T-cell (primary cell): ENCODE measurements at regions of chr15 and their contacts with region 1.

Region 1: GRCh38 chr15:69468241-69469121 is 15.9 kb downstream of the RPLP1 start:
- DNase-seq: peak; percentile 59 to 94 (median 85)
- ATAC-seq: peak; percentile 92 to 99 (median 98)
- H3K4me3 ChIP-seq: peak overlapping the region in 1 of 2 donors; percentile 16
- H3K4me3 Mint-ChIP-seq: peak overlapping the region; percentile 61 to 76 (median 68)
- H3K27ac ChIP-seq: peak overlapping the region; percentile 99
- H3K27ac Mint-ChIP-seq: peak overlapping the region; percentile 90 to 91
- H3K4me1 ChIP-seq: peaks cover 19 to 36% of the 10 kb centered on the region in 2 experiments
- H3K4me1 Mint-ChIP-seq: peaks cover 24 to 44% (median 31%) of the 10 kb centered on the region in 3 donors
- H3K27me3 ChIP-seq: peaks cover 0 to 2% of the 10 kb centered on the region in 2 experiments
- H3K27me3 Mint-ChIP-seq: no peaks in the 10 kb centered on the region

Region 2: GRCh38 chr15:69311319-69311721 is 157.2 kb before region 1 on chr15:
- CTCF ChIA-PET with region 1: no interaction called
- POLR2A ChIA-PET with region 1: no interaction called
- DNase-seq: no peak
- ATAC-seq: no peak
- H3K4me3 ChIP-seq: no peak overlapping the region
- H3K4me3 Mint-ChIP-seq: no peak overlapping the region
- H3K27ac ChIP-seq: no peak overlapping the region
- H3K27ac Mint-ChIP-seq: no peak overlapping the region
- H3K4me1 ChIP-seq: no peaks in the 10 kb centered on the region
- H3K4me1 Mint-ChIP-seq: no peaks in the 10 kb centered on the region
- H3K27me3 ChIP-seq: peaks cover 0 to 27% of the 10 kb centered on the region in 2 experiments
- H3K27me3 Mint-ChIP-seq: peaks cover 19 to 24% of the 10 kb centered on the region in 2 donors

Region 3: GRCh38 chr15:69452692-69453521 is 15.6 kb before region 1 on chr15 and contains the start of gene RPLP1:
- CTCF ChIA-PET with region 1: interaction called, 4 to 56 read pairs
- POLR2A ChIA-PET with region 1: interaction called, 26 to 76 read pairs
- DNase-seq: peak; percentile 91 to 98 (median 95)
- ATAC-seq: peak; percentile 87 to 94 (median 92)
- H3K4me3 ChIP-seq: peak within 1 kb of the TSS; percentile 82 to 94
- H3K4me3 Mint-ChIP-seq: peak within 1 kb of the TSS; percentile 95 to 98 (median 96)
- H3K27ac ChIP-seq: peak within 1 kb of the TSS; percentile 86
- H3K27ac Mint-ChIP-seq: peak within 1 kb of the TSS; percentile 99
- H3K4me1 ChIP-seq: peaks cover 15 to 25% of the 10 kb centered on the region in 2 experiments
- H3K4me1 Mint-ChIP-seq: peaks cover 38 to 45% (median 39%) of the 10 kb centered on the region in 3 donors
- H3K27me3 ChIP-seq: no peaks in the 10 kb centered on the region
- H3K27me3 Mint-ChIP-seq: no peaks in the 10 kb centered on the region
- total RNA-seq, gene RPLP1: 1,904 to 4,142 (median 3,956) TPM

Region 4: DNA sequence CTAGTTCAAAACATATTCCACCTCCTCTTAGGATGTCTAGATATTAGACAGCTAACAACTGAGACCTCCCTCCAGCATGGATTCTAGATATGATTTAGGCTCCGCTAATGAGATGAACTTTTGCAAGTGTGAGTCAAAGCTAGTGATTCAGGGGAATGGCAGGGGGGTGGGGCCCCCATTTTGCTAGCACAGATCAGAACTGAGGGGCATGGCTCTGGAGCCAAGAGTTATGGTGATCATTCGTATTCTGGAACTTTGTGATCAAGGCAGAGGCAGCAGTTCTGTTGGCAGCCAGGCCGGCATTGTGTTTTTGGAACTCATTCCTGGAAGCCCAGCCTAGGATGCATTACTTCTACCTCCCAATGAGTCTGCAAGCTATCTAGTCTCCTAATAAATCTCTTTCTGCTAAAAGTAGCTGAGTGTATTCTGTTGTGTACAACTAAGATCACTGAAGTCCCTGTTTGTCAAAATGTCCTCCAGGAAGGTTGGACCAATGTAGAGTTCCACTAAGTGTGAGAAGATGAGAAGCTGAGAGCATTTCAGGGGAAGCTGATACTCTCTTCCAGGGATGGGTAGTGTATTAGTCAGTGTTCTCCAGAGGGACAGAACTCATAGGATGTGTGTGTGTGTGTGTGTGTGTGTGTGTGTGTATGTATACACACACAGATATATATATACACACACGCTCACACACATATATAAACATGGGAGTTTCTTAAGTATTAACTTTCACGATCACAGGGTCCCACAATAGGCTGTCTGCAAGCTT is 316.5 kb after region 1 on chr15:
- CTCF ChIA-PET with region 1: no interaction called
- POLR2A ChIA-PET with region 1: no interaction called
- DNase-seq: no peak
- ATAC-seq: no peak
- H3K4me3 ChIP-seq: no peak overlapping the region
- H3K4me3 Mint-ChIP-seq: no peak overlapping the region
- H3K27ac ChIP-seq: no peak overlapping the region
- H3K27ac Mint-ChIP-seq: peak overlapping the region in 1 of 2 donors; percentile 79
- H3K4me1 ChIP-seq: peaks cover 16 to 20% of the 10 kb centered on the region in 2 experiments
- H3K4me1 Mint-ChIP-seq: peaks cover 25 to 34% (median 30%) of the 10 kb centered on the region in 3 donors
- H3K27me3 ChIP-seq: peaks cover 0 to 17% of the 10 kb centered on the region in 2 experiments
- H3K27me3 Mint-ChIP-seq: peaks cover 10 to 38% of the 10 kb centered on the region in 2 donors

Region 5: GRCh38 chr15:70494852-70495571 is 1026.5 kb after region 1 on chr15:
- CTCF ChIA-PET with region 1: no interaction called
- POLR2A ChIA-PET with region 1: no interaction called
- DNase-seq: no peak
- ATAC-seq: no peak
- H3K4me3 ChIP-seq: no peak overlapping the region
- H3K4me3 Mint-ChIP-seq: no peak overlapping the region
- H3K27ac ChIP-seq: no peak overlapping the region
- H3K27ac Mint-ChIP-seq: peak overlapping the region; percentile 66 to 79
- H3K4me1 ChIP-seq: peaks cover 23 to 61% of the 10 kb centered on the region in 2 experiments
- H3K4me1 Mint-ChIP-seq: peaks cover 67 to 90% (median 75%) of the 10 kb centered on the region in 3 donors
- H3K27me3 ChIP-seq: peaks cover 0 to 9% of the 10 kb centered on the region in 2 experiments
- H3K27me3 Mint-ChIP-seq: peaks cover 0 to 1% of the 10 kb centered on the region in 2 donors